Endothelial cell of umbilical vein (primary cell): ENCODE measurements at regions of chr16 and their contacts with region 1.

Region 1: DNA sequence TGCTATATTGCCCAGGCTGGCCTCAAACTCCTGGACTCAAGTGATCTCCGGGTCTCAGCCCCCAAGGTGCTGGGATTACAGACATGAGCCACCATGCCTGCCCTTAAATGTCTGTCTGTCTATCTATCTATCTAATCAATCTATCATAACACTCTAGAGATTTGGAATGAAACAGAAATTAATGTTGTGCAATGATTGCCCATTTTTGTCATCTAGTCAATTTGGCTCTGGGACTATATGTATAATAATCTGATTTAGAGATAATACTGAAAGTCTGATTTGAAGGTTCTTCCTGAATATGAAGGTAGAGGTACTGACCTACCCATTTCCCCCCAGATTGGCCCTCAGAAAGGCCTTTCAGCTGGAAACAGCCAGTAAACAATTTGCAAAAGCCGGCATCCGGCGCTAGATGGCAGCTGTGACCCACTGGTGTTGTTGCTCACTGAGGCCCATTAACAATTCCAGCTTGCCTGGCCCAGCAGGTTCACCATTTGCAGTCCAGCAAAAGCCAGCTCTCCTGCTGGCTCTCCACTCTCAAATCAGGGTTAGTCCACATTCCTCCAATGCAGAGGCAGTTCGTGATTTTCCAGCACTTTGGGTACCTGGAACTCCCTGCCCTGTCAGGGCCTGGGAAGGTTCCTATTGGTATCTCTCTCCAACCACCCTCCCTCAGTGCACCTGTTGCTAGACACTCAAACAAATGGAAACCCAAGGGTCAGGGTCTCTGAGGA is 22.9 kb upstream of the C16orf87 start:
- DNase-seq: peak; percentile 71
- H3K4me3 ChIP-seq: no peak overlapping the region
- H3K27ac ChIP-seq: no peak overlapping the region
- H3K4me1 ChIP-seq: no peaks in the 10 kb centered on the region
- H3K27me3 ChIP-seq: peaks cover 0 to 4% of the 10 kb centered on the region in 2 experiments
- CTCF ChIP-seq: peak; percentile 75 to 81
- POLR2A ChIP-seq: no peak

Region 2: GRCh38 chr16:46875243-46875642 is 21.4 kb after region 1 on chr16:
- CTCF ChIA-PET with region 1: interaction called, 15 read pairs
- POLR2A ChIA-PET with region 1: no interaction called
- dilution Hi-C with region 1: no loop called
- intact Hi-C with region 1: no loop called
- DNase-seq: no peak
- H3K4me3 ChIP-seq: no peak overlapping the region
- H3K27ac ChIP-seq: no peak overlapping the region
- H3K4me1 ChIP-seq: peaks cover 5% of the 10 kb centered on the region
- H3K27me3 ChIP-seq: peaks cover 0 to 5% of the 10 kb centered on the region in 2 experiments
- CTCF ChIP-seq: no peak
- POLR2A ChIP-seq: no peak

Region 3: DNA sequence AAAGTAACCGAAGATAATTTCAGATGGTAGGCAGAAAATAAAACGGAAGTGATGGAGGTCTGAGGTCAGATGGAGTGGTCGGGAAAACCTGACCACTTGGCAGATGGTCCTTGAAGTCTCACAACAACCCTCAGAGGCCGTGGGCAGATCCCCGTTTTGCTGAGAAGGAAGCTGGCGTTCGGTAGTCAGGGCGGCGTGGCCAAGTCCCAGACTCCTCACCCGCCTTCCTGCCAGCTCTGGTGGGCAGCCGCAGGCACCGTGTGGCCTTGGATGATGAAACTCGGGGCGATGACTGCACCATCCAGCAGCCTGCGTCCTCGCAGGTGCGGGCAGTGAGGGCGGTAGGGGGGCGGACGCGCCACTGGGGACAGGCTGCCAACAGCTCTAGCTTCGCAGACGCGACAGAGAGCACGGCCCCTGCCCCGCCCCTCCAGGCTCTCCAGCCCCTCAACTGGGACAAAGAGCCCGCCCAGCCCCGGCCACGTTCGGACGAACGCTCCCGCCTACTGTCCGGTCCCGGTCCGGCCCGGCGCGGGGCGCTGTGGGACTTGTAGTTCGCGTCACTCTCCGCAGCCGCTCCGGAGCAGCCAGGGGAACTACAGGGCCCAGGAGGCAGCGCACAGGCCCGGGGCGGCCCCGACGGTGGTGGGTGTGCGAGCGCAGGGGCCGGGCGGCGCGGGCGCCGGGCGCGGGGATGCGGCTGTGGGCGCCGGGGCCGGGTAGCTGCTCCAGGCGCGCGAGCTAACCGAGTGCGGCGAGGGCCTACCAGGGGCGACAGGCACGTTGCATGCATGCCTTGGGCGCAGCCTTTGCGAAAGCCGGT is 30.0 kb after region 1 on chr16 and contains the start of gene GPT2:
- CTCF ChIA-PET with region 1: interaction called, 36 read pairs
- POLR2A ChIA-PET with region 1: interaction called, 4 read pairs
- dilution Hi-C with region 1: no loop called
- intact Hi-C with region 1: loop called (anchors 1 kb)
- DNase-seq: peak; percentile 97
- H3K4me3 ChIP-seq: peak within 1 kb of the TSS; percentile 18 to 72 (median 62)
- H3K27ac ChIP-seq: no peak within 1 kb of the TSS
- H3K4me1 ChIP-seq: peaks cover 3% of the 10 kb centered on the region
- H3K27me3 ChIP-seq: peaks cover 6 to 15% of the 10 kb centered on the region in 2 experiments
- CTCF ChIP-seq: no peak
- POLR2A ChIP-seq: peak; percentile 38
- total RNA-seq, gene GPT2: 16.1 and 17.9 TPM in 2 replicates

Region 4: GRCh38 chr16:46908540-46909372 is 54.9 kb after region 1 on chr16:
- CTCF ChIA-PET with region 1: interaction called, 401 read pairs
- POLR2A ChIA-PET with region 1: no interaction called
- dilution Hi-C with region 1: no loop called
- intact Hi-C with region 1: loop called (anchors 1 kb)
- DNase-seq: peak; percentile 66
- H3K4me3 ChIP-seq: no peak overlapping the region
- H3K27ac ChIP-seq: no peak overlapping the region
- H3K4me1 ChIP-seq: no peaks in the 10 kb centered on the region
- H3K27me3 ChIP-seq: no peaks in the 10 kb centered on the region
- CTCF ChIP-seq: peak; percentile 42 to 61
- POLR2A ChIP-seq: no peak

Region 5: DNA sequence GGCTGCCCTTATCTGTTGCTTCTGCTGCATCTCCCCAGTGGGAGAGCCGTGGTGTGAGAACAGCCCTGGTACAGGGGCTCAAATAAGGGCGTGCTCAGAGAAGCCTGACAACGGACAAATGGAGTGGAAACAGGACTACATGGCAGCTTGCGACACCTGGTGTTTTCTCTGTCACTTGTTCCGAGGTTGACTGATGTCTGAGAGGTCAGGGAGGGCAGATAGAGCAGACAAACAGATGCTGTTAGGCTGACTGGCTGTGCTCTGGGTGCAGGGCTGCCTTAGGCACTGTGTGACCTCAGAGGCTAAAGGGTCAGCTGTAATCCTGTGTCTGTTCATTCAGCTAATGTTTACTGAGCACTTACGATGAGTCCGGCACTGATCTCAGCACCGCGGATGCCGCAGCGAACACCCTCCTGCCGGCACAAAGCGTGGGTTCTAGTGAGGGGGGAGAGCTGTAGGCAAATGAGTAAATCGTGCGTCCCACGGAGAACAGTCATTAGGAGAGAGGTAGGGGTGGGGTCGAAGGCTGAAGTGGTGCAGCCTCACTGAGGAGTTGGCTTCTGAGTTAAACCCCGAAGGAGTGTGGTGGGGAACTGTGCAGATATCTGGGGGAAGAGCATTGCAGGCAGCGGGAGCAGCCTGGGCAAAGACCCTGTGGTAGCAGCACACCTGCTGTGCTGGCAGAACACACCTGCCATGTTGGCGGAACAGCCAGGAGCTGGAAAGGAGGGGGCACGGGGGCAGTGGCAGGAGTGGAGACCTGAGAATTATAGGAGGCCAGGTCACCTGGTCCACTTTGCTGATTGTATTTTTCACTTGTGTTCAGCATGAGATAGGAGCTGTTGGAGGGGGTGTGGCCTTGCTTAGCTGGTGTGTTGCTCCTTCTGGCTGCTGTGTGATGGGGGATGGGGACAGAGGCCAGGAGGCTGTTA is 65.2 kb after region 1 on chr16:
- CTCF ChIA-PET with region 1: interaction called, 401 read pairs
- POLR2A ChIA-PET with region 1: no interaction called
- dilution Hi-C with region 1: no loop called
- intact Hi-C with region 1: no loop called
- DNase-seq: no peak
- H3K4me3 ChIP-seq: no peak overlapping the region
- H3K27ac ChIP-seq: no peak overlapping the region
- H3K4me1 ChIP-seq: no peaks in the 10 kb centered on the region
- H3K27me3 ChIP-seq: no peaks in the 10 kb centered on the region
- CTCF ChIP-seq: no peak
- POLR2A ChIP-seq: no peak

Region 6: DNA sequence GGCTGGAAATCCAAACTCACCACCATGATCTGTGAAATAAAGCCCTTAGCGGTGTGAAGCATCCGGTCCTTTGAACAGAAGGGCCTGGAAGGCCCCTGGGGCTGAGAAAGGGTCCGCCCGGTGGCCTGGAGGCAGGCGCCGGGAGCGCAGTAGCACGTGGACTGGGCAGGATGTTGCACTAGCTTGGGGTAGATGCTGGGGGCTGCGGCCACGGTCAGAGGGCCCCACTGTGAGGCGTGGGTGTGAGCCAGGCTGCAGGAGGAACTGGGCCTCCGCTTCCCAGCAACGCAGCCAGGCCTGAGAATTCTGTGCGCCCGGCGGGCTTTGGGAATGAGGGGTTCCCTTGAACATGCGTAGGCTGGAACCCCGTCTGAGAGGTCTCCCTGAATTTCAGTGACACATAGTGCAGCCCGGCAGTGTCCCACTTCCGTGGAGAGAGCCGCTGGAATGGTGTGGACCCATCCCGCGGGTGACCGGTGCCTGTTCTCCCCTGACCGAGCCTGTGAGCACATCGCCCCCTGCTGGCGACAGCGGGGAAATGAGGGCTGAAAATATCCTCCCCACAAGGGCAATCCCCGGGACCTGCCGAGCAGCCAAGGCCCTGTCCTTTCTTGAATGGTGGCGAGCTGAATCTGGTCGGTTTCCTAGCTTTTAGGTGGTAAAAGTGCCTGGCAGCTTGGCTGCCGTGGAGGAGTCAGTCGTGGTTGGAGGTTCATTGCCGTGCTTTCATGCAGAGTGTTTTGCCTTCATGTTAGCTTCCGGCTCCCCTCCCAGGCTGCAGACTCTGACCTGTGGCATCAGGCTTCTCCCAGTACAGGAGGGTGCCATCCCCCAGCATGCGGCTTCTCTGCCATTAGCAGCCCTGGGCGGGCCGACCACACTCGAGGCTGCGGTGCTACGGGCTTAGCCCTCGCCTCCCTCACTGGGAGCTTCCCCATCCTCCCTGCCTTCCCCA is 75.8 kb after region 1 on chr16:
- CTCF ChIA-PET with region 1: interaction called, 75 read pairs
- POLR2A ChIA-PET with region 1: no interaction called
- dilution Hi-C with region 1: no loop called
- intact Hi-C with region 1: loop called (anchors 1 kb)
- DNase-seq: peak; percentile 46
- H3K4me3 ChIP-seq: no peak overlapping the region
- H3K27ac ChIP-seq: no peak overlapping the region
- H3K4me1 ChIP-seq: no peaks in the 10 kb centered on the region
- H3K27me3 ChIP-seq: no peaks in the 10 kb centered on the region
- CTCF ChIP-seq: peak; percentile 84 to 90
- POLR2A ChIP-seq: no peak